ENCODE measurements at regions of chr1 and their contacts with region 1.

Region 1: DNA sequence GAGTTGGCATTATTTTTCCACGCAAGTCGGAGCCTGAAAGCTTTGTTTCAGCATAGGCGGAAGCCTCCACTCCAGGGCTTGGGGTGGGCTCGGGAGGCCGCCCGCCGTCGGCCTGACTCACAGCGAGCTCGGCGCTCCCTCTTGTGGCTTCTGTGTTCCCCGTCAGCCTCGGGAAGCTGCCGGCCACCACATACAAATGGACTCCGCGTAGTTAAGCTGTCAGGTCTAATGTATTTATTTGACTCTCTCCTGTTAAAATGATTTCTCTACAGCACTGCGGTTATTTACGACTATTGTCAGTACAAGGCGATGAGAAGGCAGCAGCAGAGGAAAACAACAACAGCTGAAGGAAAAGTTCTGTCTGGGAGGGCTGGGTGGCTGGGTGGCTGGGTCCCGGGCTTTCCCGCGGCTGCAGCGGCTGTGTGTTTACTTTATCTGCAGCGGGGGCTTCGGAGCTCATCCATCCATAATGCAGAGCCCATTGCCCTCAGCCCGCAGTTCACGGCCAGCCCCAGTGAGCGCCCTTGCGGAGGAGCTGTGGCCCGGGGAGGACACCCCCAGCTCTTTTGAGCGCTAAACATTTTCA is 375.7 kb upstream of the CAMK1G start:
- DNase-seq: peak; percentile 83
- H3K4me3 Mint-ChIP-seq: peak overlapping the region; percentile 62
- H3K27ac Mint-ChIP-seq: no peak overlapping the region
- H3K4me1 Mint-ChIP-seq: no peaks in the 10 kb centered on the region
- H3K27me3 Mint-ChIP-seq: peaks cover 6% of the 10 kb centered on the region
- CTCF ChIP-seq: peak; percentile 98

Region 2: DNA sequence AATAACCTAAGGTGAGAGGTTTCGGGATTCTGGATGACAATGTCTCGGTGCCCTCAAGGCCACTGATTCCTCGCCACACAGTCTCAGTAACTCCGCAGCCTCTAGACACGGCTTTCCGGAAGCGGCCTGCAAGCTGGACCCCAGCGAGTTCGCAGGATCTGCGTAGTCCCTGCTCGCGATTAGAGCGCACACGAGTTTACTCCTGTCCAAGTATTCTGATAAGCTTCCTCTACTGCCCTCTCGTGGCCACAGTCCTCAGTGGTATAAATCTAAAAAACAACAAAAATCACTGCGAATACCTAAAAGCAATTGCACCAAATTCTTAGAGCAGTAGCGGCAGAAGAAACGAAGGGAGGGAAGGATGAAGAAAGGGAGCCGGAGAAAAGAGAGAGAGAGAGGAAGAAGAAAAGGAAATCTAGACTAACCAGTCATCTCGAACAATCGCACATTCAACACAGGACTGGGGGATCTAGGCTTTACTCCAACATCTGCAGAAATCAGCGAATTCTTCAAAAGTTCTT is 962.5 kb before region 1 on chr1:
- CTCF ChIA-PET with region 1: interaction called, 35 read pairs
- POLR2A ChIA-PET with region 1: interaction called, 11 read pairs
- intact Hi-C with region 1: loop called (anchors 1 kb)
- DNase-seq: peak; percentile 98
- H3K4me3 Mint-ChIP-seq: peak overlapping the region; percentile 94
- H3K27ac Mint-ChIP-seq: no peak overlapping the region
- H3K4me1 Mint-ChIP-seq: peaks cover 26% of the 10 kb centered on the region
- H3K27me3 Mint-ChIP-seq: no peaks in the 10 kb centered on the region
- CTCF ChIP-seq: peak; percentile 94

Region 3: GRCh38 chr1:208997726-208998312 is 210.0 kb before region 1 on chr1:
- CTCF ChIA-PET with region 1: interaction called, 16 read pairs
- POLR2A ChIA-PET with region 1: no interaction called
- intact Hi-C with region 1: loop called (anchors 5 kb)
- DNase-seq: peak; percentile 70
- H3K4me3 Mint-ChIP-seq: no peak overlapping the region
- H3K27ac Mint-ChIP-seq: no peak overlapping the region
- H3K4me1 Mint-ChIP-seq: no peaks in the 10 kb centered on the region
- H3K27me3 Mint-ChIP-seq: no peaks in the 10 kb centered on the region
- CTCF ChIP-seq: peak; percentile 82

Region 4: GRCh38 chr1:209190591-209191261 is 17.1 kb before region 1 on chr1:
- CTCF ChIA-PET with region 1: interaction called, 68 read pairs
- POLR2A ChIA-PET with region 1: no interaction called
- intact Hi-C with region 1: no loop called
- DNase-seq: peak; percentile 85
- H3K4me3 Mint-ChIP-seq: no peak overlapping the region
- H3K27ac Mint-ChIP-seq: no peak overlapping the region
- H3K4me1 Mint-ChIP-seq: no peaks in the 10 kb centered on the region
- H3K27me3 Mint-ChIP-seq: no peaks in the 10 kb centered on the region
- CTCF ChIP-seq: peak; percentile 96

Region 5: DNA sequence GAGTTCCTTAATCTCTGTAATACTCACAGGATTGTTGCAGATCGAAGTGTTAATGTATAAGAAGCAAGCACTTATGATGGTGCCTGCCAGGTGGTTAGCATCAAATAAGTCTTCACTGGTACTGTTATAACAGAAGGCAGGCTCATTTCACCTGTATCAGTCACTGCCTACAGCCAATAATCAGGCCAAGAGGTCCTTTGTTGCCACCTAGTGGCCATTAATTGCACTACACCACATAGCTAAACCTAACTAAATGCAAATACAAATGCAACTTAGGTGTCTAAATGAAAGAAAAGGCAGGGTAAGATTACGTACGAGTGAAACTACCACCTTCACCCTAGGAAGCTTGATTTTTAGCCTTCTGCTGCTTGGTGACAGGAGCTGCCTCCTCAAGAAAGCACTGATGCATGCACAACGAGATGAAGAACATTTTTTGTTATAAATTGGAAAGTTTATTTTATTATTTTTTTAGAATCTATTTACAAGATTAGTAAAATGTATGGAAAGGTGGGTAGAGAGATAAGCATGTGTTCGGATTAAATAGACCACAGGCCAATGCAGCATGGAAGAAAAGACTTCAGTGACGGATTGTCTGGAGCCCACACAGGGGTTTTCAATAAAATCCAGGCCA is 41.0 kb after region 1 on chr1:
- CTCF ChIA-PET with region 1: interaction called, 387 read pairs
- POLR2A ChIA-PET with region 1: interaction called, 12 read pairs
- intact Hi-C with region 1: loop called (anchors 1 kb)
- DNase-seq: peak; percentile 91
- H3K4me3 Mint-ChIP-seq: no peak overlapping the region
- H3K27ac Mint-ChIP-seq: no peak overlapping the region
- H3K4me1 Mint-ChIP-seq: peaks cover 5% of the 10 kb centered on the region
- H3K27me3 Mint-ChIP-seq: no peaks in the 10 kb centered on the region
- CTCF ChIP-seq: peak; percentile 99

Region 6: DNA sequence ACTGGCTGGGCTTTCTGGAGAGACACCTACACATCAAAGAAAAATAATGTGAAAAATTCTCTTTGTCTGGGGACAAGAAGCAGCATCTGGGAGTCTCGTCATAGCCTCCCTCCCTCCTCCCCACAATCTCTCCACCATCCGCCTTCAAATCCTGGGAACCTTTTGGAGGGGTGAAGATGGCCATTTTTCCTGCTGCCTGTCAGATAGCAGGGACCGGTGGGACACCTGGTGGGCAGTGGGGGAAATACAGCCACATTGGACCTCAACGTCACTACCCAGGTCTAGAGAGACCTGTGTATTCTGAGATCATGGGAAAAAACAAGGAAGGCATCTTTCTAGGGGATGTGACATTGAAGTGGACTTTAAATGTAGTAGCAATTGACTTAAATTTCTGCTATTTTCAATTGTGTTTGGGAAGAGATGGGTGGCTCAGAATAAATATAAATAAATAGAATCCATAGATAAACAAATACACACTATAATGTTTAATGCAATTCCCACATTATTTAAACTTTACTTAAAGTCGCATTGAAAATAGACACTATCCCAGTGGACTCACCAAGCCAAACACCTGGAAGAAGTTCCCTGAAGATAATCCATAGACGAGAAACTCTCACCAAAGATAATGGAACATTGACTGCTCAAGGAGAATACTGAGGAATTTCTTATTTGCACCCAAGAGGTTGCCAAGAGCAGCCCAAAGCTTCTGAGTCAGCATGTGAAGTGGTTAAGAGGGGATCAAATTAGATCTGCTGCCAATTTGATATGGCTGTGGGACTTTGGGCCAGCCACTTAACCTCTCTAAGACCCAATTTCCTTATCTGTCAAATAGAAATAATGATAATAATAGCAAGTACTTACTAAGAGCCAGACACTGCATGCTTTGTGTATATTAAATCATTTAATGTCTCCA is 228.1 kb after region 1 on chr1:
- CTCF ChIA-PET with region 1: interaction called, 37 read pairs
- POLR2A ChIA-PET with region 1: interaction called, 21 read pairs
- intact Hi-C with region 1: loop called (anchors 1 kb)
- DNase-seq: peak; percentile 97
- H3K4me3 Mint-ChIP-seq: no peak overlapping the region
- H3K27ac Mint-ChIP-seq: peak overlapping the region; percentile 90
- H3K4me1 Mint-ChIP-seq: peaks cover 51% of the 10 kb centered on the region
- H3K27me3 Mint-ChIP-seq: no peaks in the 10 kb centered on the region
- CTCF ChIP-seq: peak; percentile 100

Region 7: GRCh38 chr1:209513226-209513625 is 305.4 kb after region 1 on chr1:
- CTCF ChIA-PET with region 1: interaction called, 13 read pairs
- POLR2A ChIA-PET with region 1: interaction called, 3 read pairs
- intact Hi-C with region 1: loop called (anchors 2 kb)
- DNase-seq: peak; percentile 84
- H3K4me3 Mint-ChIP-seq: no peak overlapping the region
- H3K27ac Mint-ChIP-seq: no peak overlapping the region
- H3K4me1 Mint-ChIP-seq: peaks cover 11% of the 10 kb centered on the region
- H3K27me3 Mint-ChIP-seq: no peaks in the 10 kb centered on the region
- CTCF ChIP-seq: peak; percentile 93